Activated CD4-positive, alpha-beta T cell treated with anti-CD3 and anti-CD28 coated beads, Interleukin-2, amount 10 ng/mL, durations not matched to agents 24 days and 14 days (primary cell): ENCODE measurements at regions of chr15 and their contacts with region 1.

Region 1: DNA sequence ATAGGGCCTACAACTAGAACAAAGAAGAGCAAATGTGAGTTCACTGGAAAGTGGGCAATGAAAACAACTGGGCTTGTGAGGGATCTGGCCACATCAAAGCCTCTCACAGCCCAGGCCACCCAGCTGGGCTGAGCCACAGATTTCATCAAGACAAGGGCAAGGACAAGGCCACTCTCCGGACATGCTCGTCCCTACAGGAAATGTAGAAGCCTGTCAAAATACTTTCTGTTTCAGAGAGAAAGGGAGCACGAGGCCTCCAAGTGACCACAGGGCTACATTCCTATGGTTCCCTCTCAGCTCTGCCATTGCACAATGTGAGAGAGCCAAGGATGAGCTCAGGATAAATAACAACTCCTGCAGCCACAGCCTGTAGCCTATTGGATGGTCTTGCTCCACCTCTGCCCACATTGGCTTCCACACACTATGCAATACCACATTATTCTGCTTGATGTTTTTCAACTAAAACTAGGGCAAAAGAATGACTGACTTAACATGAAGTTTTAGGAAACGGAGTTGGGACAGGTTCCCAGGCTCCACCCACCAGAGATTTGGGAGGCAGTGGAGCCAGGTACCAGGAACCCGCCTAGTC is 12.1 kb downstream of the TBC1D2B start:
- DNase-seq: peak; percentile 74
- H3K4me3 Mint-ChIP-seq: no peak overlapping the region
- H3K27ac Mint-ChIP-seq: no peak overlapping the region
- H3K4me1 Mint-ChIP-seq: peaks cover 65% of the 10 kb centered on the region
- H3K27me3 Mint-ChIP-seq: no peaks in the 10 kb centered on the region

Region 2: GRCh38 chr15:78034495-78035191 is 30.7 kb before region 1 on chr15:
- intact Hi-C with region 1: loop called (anchors 1 kb)
- DNase-seq: peak; percentile 92
- H3K4me3 Mint-ChIP-seq: peak overlapping the region; percentile 75
- H3K27ac Mint-ChIP-seq: peak overlapping the region; percentile 76
- H3K4me1 Mint-ChIP-seq: peaks cover 72% of the 10 kb centered on the region
- H3K27me3 Mint-ChIP-seq: no peaks in the 10 kb centered on the region

Region 3: DNA sequence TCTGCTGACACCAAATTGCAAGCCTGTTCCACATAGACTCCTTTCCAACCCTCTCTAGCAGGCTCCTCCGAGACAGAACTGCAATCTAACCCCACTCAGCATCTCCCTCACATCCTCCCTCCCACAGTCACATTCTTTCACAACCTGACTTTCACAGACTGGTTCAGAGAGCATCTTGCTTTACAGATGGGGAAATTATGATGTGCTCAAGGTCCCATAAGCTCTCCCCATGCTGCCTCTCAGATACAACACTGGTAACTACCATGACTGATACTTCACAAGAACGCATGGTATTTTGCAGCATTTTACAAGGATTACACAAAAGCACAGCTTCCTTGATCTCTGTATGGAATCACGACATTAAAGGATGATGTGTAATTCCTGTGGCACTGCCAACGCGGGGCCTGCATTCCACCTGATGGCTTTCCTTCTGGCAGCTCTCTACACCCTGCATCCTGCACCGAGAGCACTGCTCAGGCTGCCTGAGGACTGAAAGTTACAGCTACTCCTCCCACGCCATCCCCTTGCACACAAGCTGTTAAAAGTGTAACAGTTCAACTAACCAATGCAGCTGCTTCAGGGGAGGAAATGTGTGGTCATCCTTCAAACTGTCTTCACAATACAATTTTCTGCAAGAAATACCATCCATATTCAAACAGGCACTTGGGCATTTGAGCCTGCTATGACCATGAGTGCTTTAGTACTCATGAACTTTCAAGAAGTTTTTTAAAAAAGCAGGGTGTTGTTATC is 15.5 kb before region 1 on chr15:
- intact Hi-C with region 1: loop called (anchors 1 kb)
- DNase-seq: peak; percentile 89
- H3K4me3 Mint-ChIP-seq: peak overlapping the region; percentile 79
- H3K27ac Mint-ChIP-seq: peak overlapping the region; percentile 98
- H3K4me1 Mint-ChIP-seq: peaks cover 86% of the 10 kb centered on the region
- H3K27me3 Mint-ChIP-seq: no peaks in the 10 kb centered on the region

Region 4: GRCh38 chr15:78077058-78077877 is 11.9 kb after region 1 on chr15 and contains the start of gene TBC1D2B:
- intact Hi-C with region 1: loop called (anchors 1 kb)
- DNase-seq: peak; percentile 92
- H3K4me3 Mint-ChIP-seq: peak within 1 kb of the TSS; percentile 97
- H3K27ac Mint-ChIP-seq: peak within 1 kb of the TSS; percentile 90
- H3K4me1 Mint-ChIP-seq: peaks cover 45% of the 10 kb centered on the region
- H3K27me3 Mint-ChIP-seq: no peaks in the 10 kb centered on the region
- total RNA-seq, gene TBC1D2B: 56.8 and 62.3 TPM in 2 replicates

Region 5: GRCh38 chr15:78149068-78149804 is 83.9 kb after region 1 on chr15 and contains the start of gene IDH3A:
- intact Hi-C with region 1: no loop called
- DNase-seq: peak; percentile 100
- H3K4me3 Mint-ChIP-seq: peak within 1 kb of the TSS; percentile 98
- H3K27ac Mint-ChIP-seq: peak within 1 kb of the TSS; percentile 93
- H3K4me1 Mint-ChIP-seq: peaks cover 38% of the 10 kb centered on the region
- H3K27me3 Mint-ChIP-seq: no peaks in the 10 kb centered on the region
- total RNA-seq, gene IDH3A: 165 and 169 TPM in 2 replicates